A673 (cell line): ENCODE measurements at regions of chr4 and their contacts with region 1.

Region 1: DNA sequence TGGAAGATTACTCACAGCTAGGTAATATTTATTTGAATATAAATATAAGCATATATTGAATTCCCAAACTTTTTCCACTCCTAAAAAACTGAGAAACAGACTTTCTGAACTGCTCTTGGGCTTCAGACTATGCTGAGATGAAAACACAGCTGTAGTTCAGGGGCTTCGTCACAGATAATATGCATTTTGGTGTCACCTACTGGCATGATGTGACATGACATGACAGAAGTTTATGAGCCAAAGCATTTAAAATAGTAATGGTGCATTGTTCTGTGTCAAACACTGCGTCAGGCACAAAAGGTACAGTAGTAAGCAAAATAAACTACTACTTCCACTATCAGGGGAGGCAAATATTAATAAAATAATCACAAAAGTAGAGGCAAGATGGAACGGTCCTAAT is 171.3 kb downstream of the BTC start:
- DNase-seq: peak; percentile 64
- H3K4me3 ChIP-seq: no peak overlapping the region
- H3K27ac ChIP-seq: no peak overlapping the region
- H3K4me1 ChIP-seq: peaks cover 4% of the 10 kb centered on the region
- H3K27me3 ChIP-seq: no peaks in the 10 kb centered on the region
- CTCF ChIP-seq: peak; percentile 60

Region 2: DNA sequence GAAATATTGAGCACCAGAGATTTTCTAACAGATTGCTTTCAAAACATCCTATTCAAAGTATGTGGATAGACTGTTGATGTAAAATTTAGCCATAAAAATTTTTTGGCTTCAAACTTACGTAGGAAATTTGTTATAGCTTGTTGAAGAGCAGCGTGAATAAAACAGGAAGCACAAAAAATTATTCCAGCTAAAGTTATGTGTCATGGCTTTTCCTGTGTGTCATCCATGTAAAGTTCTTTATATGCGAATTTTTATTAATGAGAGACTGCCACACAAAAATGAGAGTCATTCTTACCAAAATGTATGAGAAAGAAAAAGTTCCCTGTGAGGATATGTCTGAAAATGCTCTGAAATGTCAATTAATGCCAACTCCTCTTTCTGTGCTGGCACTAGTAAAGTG is 295.3 kb before region 1 on chr4:
- CTCF ChIA-PET with region 1: no interaction called
- POLR2A ChIA-PET with region 1: no interaction called
- intact Hi-C with region 1: loop called (anchors 5 kb)
- DNase-seq: peak; percentile 12
- H3K4me3 ChIP-seq: no peak overlapping the region
- H3K27ac ChIP-seq: no peak overlapping the region
- H3K4me1 ChIP-seq: no peaks in the 10 kb centered on the region
- H3K27me3 ChIP-seq: no peaks in the 10 kb centered on the region
- CTCF ChIP-seq: no peak

Region 3: GRCh38 chr4:74376888-74377483 is 246.1 kb before region 1 on chr4:
- CTCF ChIA-PET with region 1: no interaction called
- POLR2A ChIA-PET with region 1: no interaction called
- intact Hi-C with region 1: loop called (anchors 1 kb)
- DNase-seq: peak; percentile 40
- H3K4me3 ChIP-seq: no peak overlapping the region
- H3K27ac ChIP-seq: no peak overlapping the region
- H3K4me1 ChIP-seq: no peaks in the 10 kb centered on the region
- H3K27me3 ChIP-seq: no peaks in the 10 kb centered on the region
- CTCF ChIP-seq: peak; percentile 54; the same call in 1 of the 2 replicates

Region 4: DNA sequence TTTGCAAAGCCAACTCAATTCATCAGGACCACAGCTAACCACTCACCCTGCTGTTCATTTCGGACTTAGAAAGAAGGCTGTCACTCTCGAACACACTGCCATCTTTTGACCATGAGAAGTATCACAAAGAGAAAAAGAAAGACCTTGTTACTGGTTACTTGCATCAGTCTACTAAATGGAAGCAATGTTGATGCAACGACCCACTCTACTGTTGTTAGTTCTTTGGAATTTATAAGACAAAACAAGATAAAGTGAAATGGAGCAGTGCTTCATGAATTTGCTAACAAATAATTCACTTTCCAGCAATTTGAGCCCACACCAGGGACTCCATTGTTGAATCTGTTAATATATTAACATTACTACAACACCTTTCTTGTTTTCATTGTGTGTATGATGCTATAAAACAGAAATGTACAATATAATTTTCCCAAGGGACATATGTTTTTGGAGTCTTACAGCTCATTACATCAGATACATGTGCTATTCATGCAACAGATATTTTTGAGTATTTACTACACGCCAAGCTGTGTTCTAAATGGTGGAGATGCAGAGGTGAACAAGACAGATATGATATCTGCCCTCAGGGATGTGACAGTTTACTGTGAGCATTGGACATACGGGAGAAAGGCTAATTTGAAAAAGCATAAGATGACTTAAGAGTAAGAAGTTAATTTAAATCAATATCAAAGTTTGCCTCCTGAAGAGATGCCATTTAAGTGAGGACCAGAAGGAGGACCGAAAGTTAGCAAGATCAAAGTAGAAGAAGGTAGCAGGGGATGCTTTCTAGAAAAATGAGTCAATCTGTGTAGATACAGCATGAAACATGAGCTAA is 90.9 kb before region 1 on chr4:
- CTCF ChIA-PET with region 1: no interaction called
- POLR2A ChIA-PET with region 1: no interaction called
- intact Hi-C with region 1: loop called (anchors 2 kb)
- DNase-seq: peak; percentile 64
- H3K4me3 ChIP-seq: no peak overlapping the region
- H3K27ac ChIP-seq: no peak overlapping the region
- H3K4me1 ChIP-seq: no peaks in the 10 kb centered on the region
- H3K27me3 ChIP-seq: no peaks in the 10 kb centered on the region
- CTCF ChIP-seq: peak; percentile 52